Dendritic cell treated with granulocyte-macrophage colony-stimulating factor and Interleukin-4, amounts not matched to agents 40 ng/mL and 50 ng/mL, for 4 days (primary cell): ENCODE measurements at regions of chr2 and their contacts with region 1.

Region 1: DNA sequence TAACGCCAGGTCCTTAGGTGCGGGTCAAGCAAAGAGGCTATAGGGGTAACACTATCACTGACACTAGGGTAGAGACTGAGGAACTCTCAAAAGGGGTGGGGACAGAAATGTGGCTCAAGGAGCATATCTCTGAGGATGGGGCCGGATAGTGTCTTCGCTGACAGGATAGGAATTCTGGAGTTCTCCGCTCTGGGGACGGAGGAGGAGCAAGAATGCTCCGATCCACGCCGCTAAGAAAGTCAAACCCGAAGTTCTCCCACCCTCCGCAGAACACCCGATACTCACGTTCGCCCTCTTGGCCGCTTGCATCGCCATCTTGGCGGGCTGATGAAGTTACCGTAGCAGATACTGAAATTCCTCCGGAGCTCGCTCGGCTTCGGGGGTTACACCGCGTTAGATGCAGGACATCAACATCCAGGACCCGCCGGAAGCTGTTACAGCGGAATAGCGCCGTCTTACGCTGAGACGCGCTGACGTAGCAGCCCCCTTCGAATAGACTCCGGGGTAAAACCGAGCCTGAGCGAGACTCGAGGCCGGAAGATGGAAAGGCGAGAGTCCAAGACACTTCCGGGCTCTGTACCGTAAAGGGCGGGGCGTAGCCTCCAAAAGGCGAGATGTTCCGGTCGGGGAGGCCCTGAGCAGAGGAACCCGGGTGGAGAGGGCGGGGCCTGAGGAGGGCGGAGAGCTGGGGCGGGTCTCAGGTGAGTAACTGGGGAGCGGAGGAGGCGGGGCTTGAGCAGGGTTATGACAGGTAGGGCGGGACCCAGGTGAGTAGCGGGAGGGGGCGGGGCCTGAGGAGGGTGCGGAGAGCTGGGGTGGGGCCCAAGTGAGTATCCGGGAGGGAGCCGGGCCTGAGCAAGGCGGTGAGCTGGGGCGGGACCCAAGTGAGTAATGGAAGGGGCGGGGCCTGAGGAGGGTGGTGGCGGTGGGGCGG is at the start of gene SF3B6:
- H3K4me3 Mint-ChIP-seq: peak within 1 kb of the TSS; percentile 98
- H3K27ac Mint-ChIP-seq: peak within 1 kb of the TSS; percentile 97
- H3K4me1 Mint-ChIP-seq: peaks cover 27% of the 10 kb centered on the region
- H3K27me3 Mint-ChIP-seq: no peaks in the 10 kb centered on the region

Region 2: DNA sequence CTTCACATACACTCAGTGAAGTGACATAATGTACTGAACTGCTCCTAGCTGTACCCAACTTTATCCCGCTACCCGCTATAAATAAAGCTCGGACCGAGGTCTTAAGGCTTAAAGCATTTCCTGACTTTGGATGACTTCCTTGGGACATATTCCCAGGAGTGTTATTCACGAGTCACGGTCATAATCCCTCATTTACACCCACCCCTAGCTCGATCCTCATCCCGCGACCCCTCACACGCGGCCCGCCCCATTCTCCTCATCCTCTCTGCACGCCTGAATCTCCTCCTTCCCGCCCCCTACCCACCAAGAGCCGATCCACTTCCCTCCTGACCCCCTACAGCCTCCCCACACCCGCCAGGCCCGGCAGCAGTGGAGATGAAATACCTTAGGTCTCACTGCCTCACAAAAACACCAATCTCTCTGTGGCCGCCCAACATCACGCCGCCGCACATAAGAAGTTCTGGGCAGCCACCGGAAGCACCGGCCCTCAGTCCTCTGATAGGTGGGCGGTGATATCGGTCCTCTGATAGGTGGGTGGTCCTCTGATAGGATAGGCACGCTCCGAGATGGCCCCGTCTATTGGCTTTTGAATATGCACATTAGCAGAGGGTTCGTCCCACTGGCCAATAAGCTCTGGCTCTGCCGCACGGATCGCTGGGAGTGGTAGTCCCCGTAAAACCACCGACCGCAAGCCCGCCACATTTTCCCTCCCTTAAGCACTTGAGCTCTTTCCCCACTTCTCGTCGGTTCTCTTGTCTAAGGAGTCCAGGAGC is 29.1 kb before region 1 on chr2 and contains the start of gene WDCP:
- intact Hi-C with region 1: loop called (anchors 1 kb)
- H3K4me3 Mint-ChIP-seq: peak within 1 kb of the TSS; percentile 96
- H3K27ac Mint-ChIP-seq: peak within 1 kb of the TSS; percentile 85
- H3K4me1 Mint-ChIP-seq: peaks cover 19% of the 10 kb centered on the region
- H3K27me3 Mint-ChIP-seq: peaks cover 17% of the 10 kb centered on the region